Prostate gland (tissue), 2 donors: ENCODE measurements at regions of chr15 and their contacts with region 1.

Region 1: DNA sequence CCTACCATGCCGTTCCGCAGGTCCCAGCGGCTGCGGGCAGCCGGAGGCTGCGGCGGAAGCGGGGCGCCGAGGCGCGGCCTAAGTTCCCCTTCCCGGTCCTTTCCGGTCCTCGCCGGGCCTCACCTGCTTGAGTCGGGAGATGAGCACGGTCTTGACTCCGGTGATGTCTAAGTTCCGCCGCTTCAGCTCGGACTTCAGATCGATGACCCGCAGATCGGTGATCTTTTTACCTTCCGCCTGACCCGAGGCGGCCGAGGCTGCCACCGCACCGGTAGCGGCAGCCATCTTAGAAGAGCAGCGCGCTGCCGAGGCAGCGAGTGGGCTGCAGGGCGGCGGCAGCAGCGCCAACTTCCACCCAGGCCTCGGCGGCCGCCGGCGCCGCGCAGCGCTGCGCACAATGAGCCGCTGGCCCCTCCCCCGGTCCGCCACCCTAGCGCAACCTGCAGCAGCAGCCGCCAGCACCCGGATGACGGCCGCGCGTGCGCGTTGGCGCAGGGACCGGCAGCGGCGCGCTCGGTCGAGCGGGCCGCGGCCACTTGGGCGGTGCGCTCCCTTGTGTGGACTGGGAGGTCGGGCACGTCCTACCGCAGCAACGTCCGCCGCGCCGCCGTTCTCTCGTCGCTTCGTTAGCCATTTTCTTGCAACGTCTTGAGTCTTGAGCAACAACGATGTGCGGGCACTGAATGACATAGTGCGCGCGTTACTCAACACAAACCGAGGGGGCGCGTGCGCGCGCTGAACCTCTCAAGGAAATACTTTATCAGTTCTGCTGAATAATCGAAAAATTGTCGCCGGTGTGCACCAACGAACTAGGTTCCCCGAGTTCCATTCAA is at the start of gene SLTM:
- DNase-seq: peak; percentile 91
- H3K4me3 ChIP-seq: peak within 1 kb of the TSS; percentile 70 to 93
- H3K27ac ChIP-seq: peak within 1 kb of the TSS; percentile 97 to 99
- H3K4me1 ChIP-seq: no peaks in the 10 kb centered on the region
- H3K27me3 ChIP-seq: no peaks in the 10 kb centered on the region
- CTCF ChIP-seq: peak in 3 of 4 experiments; percentile 19 to 59 (median 45)
- POLR2A ChIP-seq: peak; percentile 94
- total RNA-seq, gene SLTM: 65.8 to 73.3 TPM

Region 2: DNA sequence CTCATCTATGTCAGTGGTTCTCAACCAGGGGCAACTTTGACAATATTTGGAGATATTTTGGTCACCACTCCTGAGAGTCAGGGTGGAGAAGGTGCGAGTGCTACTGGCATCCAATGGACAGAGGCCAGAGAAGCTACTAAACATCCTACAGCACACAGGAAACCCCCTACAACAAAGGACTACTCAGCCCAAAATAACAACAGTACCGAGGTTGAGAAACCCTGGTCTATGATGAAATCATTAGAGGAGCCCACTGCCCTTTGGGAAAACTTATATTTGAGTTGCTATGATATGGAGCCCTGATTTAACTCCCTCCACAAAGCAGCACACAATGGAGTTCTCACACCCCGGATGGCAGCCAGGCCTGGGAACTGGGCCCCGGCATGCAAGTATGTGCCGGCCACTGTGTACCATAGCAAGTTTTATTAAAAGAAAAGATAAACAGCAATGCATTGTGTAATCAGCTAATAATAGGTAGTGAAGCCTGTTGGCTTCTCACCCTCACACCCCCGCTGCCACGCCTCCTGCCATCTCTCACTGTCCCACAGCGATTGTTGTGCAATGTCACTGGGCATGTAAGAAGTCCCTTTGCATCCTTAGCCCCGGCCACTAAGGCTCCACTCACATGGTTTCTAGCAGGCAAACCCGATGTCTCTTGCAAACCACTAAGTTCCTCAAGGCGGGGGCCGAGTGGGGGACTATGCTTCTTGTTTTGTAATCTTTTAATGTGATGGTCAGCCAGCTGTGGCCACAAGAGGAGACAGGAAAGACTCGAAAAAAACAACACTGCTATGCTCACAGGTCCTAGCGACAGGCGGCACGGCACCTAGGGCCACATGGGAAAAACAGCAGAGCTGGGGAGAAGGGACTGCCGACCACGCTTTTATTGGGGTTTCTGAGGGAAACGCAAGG is 685.4 kb before region 1 on chr15:
- intact Hi-C with region 1: loop called (anchors 5 kb)
- DNase-seq: peak; percentile 93
- H3K4me3 ChIP-seq: no peak overlapping the region
- H3K27ac ChIP-seq: peak overlapping the region; percentile 63 to 75
- H3K4me1 ChIP-seq: peaks cover 6% of the 10 kb centered on the region
- H3K27me3 ChIP-seq: no peaks in the 10 kb centered on the region
- CTCF ChIP-seq: peak in 1 of 4 experiments; percentile 17
- POLR2A ChIP-seq: no peak

Region 3: GRCh38 chr15:58770857-58771620 is 162.5 kb before region 1 on chr15 and contains the start of gene MINDY2:
- intact Hi-C with region 1: loop called (anchors 5 kb)
- DNase-seq: peak; percentile 99
- H3K4me3 ChIP-seq: peak within 1 kb of the TSS; percentile 61 to 91
- H3K27ac ChIP-seq: peak within 1 kb of the TSS; percentile 93 to 99
- H3K4me1 ChIP-seq: peaks cover 3% of the 10 kb centered on the region
- H3K27me3 ChIP-seq: no peaks in the 10 kb centered on the region
- CTCF ChIP-seq: peak in 3 of 4 experiments; percentile 21 to 40 (median 33)
- POLR2A ChIP-seq: peak; percentile 99
- total RNA-seq, gene MINDY2: 14.3 to 22.9 TPM

Region 4: GRCh38 chr15:58805095-58805494 is 128.4 kb before region 1 on chr15:
- intact Hi-C with region 1: no loop called
- DNase-seq: no peak
- H3K4me3 ChIP-seq: no peak overlapping the region
- H3K27ac ChIP-seq: no peak overlapping the region
- H3K4me1 ChIP-seq: no peaks in the 10 kb centered on the region
- H3K27me3 ChIP-seq: no peaks in the 10 kb centered on the region
- CTCF ChIP-seq: no peak
- POLR2A ChIP-seq: no peak